Colonic mucosa (tissue), 4 donors: ENCODE measurements at regions of chr16 and their contacts with region 1.

Region 1: DNA sequence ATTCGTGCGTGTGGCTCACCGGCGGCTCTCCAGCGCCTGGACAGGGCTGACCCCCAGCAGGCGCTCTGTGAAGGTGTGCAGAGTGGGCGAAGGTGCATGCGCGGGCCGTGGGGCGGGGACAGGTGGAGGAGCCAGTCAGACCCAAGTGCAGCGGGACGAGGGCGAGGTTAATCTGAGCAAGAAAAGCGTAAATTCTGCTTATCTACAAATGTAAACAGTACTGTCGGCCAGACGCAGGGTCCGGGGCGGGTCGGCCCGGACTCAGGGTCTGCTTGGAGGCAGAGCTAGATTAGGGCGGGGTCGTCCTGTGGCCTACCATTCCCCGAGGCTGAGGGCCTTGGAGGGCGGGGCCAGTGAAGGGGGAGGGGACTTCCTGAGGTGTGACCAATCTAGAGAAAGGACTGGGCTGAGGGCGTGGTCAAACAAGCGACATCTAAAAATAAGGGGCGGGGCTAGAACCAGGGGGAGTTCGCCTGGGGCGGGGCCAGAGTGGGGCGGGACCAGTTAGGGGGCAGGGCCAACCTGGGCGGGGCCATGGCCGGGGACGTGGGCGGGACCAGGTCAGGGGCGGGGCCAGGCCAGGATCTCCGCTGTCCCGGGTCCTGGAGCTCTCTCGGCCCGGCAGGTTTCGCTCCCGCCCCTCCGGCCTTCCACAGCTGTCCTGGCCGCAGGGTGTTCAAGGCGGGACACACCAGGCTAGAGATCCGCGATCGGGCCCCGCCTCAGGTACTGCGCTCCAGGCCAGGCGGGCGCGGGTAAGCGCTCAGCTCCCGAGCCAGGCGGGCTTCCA is at the start of gene SEC14L5:
- DNase-seq: peak; percentile 100
- H3K4me3 ChIP-seq: peak within 1 kb of the TSS; percentile 45
- H3K27ac ChIP-seq: peak within 1 kb of the TSS; percentile 78
- H3K4me1 ChIP-seq: peaks cover 5% of the 10 kb centered on the region
- H3K27me3 ChIP-seq: no peaks in the 10 kb centered on the region
- CTCF ChIP-seq: no peak
- total RNA-seq, gene SEC14L5: 0.59 to 1.8 TPM

Region 2: DNA sequence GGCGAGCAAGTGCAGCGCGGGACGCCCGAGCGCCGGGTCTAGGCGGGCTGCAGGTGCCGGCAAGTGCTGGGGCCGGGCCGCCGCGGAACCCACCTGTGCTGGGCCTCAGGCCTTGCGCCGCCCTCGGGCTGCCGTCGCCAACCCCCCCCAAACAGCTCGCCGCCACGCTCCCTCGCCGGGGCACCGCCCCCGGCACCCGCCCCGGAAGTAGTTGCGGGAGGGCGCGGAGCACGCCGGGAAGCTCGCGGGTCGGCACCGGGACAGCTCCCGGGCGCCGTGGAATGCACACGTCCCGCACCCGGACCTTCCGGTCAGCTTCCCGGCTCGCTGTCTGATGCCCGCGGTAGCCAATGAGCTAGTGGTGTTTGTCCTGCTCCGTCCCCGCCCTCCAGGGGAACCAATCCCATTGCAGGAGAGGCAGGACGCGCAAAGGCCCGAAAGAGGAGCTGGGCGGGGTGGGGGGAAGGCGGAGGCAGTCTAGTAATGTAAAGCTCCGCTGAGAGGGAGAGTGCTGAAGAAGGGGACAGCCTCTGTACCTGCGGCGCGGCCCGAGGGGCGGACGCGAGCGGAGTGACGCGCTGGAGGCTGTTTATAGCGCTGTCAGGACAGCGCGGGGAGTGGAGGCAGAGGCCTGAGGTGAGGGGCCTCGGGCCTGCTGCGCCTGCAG is 223.7 kb before region 1 on chr16 and contains the starts of genes ANKS3 and DNAAF8:
- intact Hi-C with region 1: loop called (anchors 10 kb)
- DNase-seq: peak; percentile 98
- H3K4me3 ChIP-seq: peak within 1 kb of the TSS; percentile 99
- H3K27ac ChIP-seq: peak within 1 kb of the TSS; percentile 80
- H3K4me1 ChIP-seq: no peaks in the 10 kb centered on the region
- H3K27me3 ChIP-seq: no peaks in the 10 kb centered on the region
- CTCF ChIP-seq: no peak
- total RNA-seq, gene ANKS3: 10.1 to 23.2 TPM
- total RNA-seq, gene DNAAF8: 0.61 to 0.69 TPM

Region 3: GRCh38 chr16:4839942-4840341 is 118.0 kb before region 1 on chr16:
- intact Hi-C with region 1: loop called (anchors 5 kb)
- DNase-seq: no peak
- H3K4me3 ChIP-seq: no peak overlapping the region
- H3K27ac ChIP-seq: no peak overlapping the region
- H3K4me1 ChIP-seq: no peaks in the 10 kb centered on the region
- H3K27me3 ChIP-seq: no peaks in the 10 kb centered on the region
- CTCF ChIP-seq: no peak